IMR-90 (cell line): ENCODE measurements at regions of chr12 and their contacts with region 1.

Region 1: GRCh38 chr12:44544018-44544417 is 332.1 kb downstream of the NELL2 start:
- DNase-seq: no peak
- ATAC-seq: no peak
- H3K4me3 ChIP-seq: no peak overlapping the region
- H3K27ac ChIP-seq: no peak overlapping the region
- H3K4me1 ChIP-seq: no peaks in the 10 kb centered on the region
- H3K27me3 ChIP-seq: no peaks in the 10 kb centered on the region
- CTCF ChIP-seq: no peak
- POLR2A ChIP-seq: no peak
- RAD21 ChIP-seq: no peak

Region 2: DNA sequence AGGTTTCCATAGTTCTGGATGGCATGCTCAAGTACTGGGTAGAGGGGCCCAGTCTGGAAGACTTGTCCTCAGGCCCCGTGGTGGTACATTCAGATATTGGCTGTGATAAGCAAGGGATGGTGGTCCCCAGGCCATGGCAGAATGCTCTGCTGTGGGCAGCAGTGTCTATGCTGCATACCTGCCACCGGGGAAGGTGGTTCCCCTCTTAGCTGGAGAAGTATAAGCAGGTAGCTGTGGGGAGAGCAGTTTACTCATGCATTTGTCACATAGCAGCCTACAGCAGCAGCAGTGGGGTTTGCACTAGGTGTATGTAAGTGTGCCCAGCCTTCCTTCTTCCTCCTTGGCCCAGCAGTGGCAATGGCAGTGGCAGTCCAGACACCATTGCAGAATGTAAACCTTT is 922.8 kb before region 1 on chr12:
- CTCF ChIA-PET with region 1: no interaction called
- POLR2A ChIA-PET with region 1: no interaction called
- dilution Hi-C with region 1: no loop called
- in situ Hi-C with region 1: no loop called
- intact Hi-C with region 1: loop called (anchors 5 kb)
- DNase-seq: no peak
- ATAC-seq: no peak
- H3K4me3 ChIP-seq: no peak overlapping the region
- H3K27ac ChIP-seq: no peak overlapping the region
- H3K4me1 ChIP-seq: no peaks in the 10 kb centered on the region
- H3K27me3 ChIP-seq: no peaks in the 10 kb centered on the region
- CTCF ChIP-seq: no peak
- POLR2A ChIP-seq: no peak
- RAD21 ChIP-seq: no peak